Lower leg skin (tissue), 4 donors: ENCODE measurements at regions of chr13 and their contacts with region 1.

Region 1: GRCh38 chr13:26698392-26699196 is 62.0 kb downstream of the GPR12 start:
- DNase-seq: peak; percentile 86 to 98
- H3K4me3 ChIP-seq: no peak overlapping the region
- CTCF ChIP-seq: peak in 1 of 3 donors; percentile 89
- POLR2A ChIP-seq: no peak

Region 2: GRCh38 chr13:26112843-26113242 is 585.8 kb before region 1 on chr13:
- intact Hi-C with region 1: no loop called
- DNase-seq: no peak
- H3K4me3 ChIP-seq: no peak overlapping the region
- CTCF ChIP-seq: no peak
- POLR2A ChIP-seq: no peak

Region 3: GRCh38 chr13:26186118-26186870 is 512.3 kb before region 1 on chr13:
- intact Hi-C with region 1: loop called (anchors 5 kb)
- DNase-seq: peak; percentile 74 to 95
- H3K4me3 ChIP-seq: peak overlapping the region; percentile 42
- CTCF ChIP-seq: no peak
- POLR2A ChIP-seq: no peak

Region 4: GRCh38 chr13:26327940-26328725 is 370.5 kb before region 1 on chr13:
- intact Hi-C with region 1: no loop called
- DNase-seq: no peak
- H3K4me3 ChIP-seq: no peak overlapping the region
- CTCF ChIP-seq: no peak
- POLR2A ChIP-seq: no peak

Region 5: GRCh38 chr13:26485786-26486185 is 212.8 kb before region 1 on chr13:
- intact Hi-C with region 1: loop called (anchors 5 kb)
- DNase-seq: peak; percentile 57 to 92
- H3K4me3 ChIP-seq: no peak overlapping the region
- CTCF ChIP-seq: no peak
- POLR2A ChIP-seq: no peak

Region 6: GRCh38 chr13:27130979-27131623 is 432.5 kb after region 1 on chr13:
- intact Hi-C with region 1: no loop called
- DNase-seq: no peak
- H3K4me3 ChIP-seq: no peak overlapping the region
- CTCF ChIP-seq: no peak
- POLR2A ChIP-seq: no peak